ENCODE measurements at regions of chr14 and their contacts with region 1.

Region 1: GRCh38 chr14:106530423-106531107 is 1004.2 kb downstream of the TMEM121 start:
- DNase-seq: peak; percentile 43
- ATAC-seq: peak; percentile 69
- H3K4me3 Mint-ChIP-seq: no peak overlapping the region
- H3K27ac Mint-ChIP-seq: no peak overlapping the region
- H3K4me1 Mint-ChIP-seq: peaks cover 5% of the 10 kb centered on the region
- H3K27me3 Mint-ChIP-seq: peaks cover 33% of the 10 kb centered on the region

Region 2: DNA sequence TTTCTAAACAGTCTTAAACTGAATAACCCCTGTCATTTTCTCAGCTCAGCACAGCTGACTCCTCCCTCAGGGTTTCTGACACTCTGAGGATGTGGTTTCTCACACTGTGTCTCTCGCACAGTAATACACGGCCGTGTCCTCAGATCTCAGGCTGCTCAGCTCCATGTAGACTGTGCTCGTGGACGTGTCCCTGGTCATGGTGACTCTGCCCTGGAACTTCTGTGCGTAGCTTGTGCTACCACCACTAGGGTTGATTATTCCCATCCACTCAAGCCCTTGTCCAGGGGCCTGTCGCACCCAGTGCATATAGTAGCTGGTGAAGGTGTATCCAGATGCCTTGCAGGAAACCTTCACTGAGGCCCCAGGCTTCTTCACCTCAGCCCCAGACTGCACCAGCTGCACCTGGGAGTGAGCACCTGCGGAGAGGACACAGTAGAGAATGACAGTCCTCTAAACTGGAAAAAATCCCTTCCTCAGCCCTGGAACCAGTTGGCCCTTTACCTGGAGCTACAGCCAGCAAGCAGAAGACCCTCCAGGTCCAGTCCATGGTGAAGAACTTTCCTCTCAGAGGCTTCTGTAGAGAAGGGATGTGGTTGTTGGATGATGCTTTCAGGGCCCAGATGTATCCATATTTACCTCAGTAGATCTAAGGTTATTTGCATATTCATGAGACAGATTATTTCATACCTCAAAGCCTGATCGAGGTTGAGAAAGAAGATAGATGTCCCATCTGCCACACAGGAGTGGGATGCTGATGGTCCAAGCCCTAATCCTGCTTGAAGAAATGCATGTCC is 19.4 kb before region 1 on chr14:
- CTCF ChIA-PET with region 1: interaction called, 84 read pairs
- POLR2A ChIA-PET with region 1: no interaction called
- DNase-seq: peak; percentile 82
- ATAC-seq: peak; percentile 79
- H3K4me3 Mint-ChIP-seq: peak overlapping the region; percentile 56
- H3K27ac Mint-ChIP-seq: peak overlapping the region; percentile 93
- H3K4me1 Mint-ChIP-seq: peaks cover 71% of the 10 kb centered on the region
- H3K27me3 Mint-ChIP-seq: peaks cover 17% of the 10 kb centered on the region

Region 3: DNA sequence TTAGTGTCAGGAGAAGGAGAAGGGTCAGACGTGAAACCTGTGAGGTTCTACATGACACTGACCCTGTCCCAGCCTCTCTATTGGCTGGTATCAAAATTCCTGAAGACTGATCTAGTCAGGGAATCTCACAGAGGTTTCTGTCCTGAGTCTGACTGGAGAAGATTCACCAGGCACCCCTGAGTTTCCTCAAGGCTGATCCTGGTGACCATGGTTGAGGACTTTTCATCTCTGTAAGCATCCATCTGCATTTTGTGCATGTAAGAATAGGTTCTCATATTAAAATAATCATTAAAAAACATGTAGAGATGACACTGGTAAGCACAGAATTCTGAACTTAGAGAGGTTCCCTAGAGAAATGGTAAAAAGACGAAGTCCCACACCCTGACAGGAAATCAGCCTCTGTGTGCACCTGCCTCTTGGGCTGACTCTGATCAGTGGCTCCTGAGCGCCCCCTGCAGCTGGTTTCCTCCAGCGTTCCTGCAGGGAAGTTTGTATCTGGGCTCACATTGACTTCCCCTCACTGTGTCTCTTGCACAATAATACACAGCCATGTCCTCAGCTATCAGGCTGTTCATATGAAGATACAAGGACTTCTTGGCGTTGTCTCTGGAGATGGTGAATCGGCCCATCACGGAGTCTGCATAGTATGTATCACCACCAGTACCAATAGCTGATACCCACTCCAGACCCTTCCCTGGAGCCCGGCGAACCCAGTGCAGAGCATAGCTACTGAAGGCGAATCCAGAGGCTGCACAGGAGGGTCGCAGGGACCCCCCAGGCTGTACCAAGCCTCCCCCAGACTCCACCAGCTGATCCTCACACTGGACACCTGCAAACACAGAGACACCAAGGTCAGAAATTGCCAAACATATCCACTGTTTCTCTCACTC is 12.3 kb before region 1 on chr14:
- CTCF ChIA-PET with region 1: interaction called, 72 read pairs
- POLR2A ChIA-PET with region 1: no interaction called
- DNase-seq: peak; percentile 91
- ATAC-seq: peak; percentile 81
- H3K4me3 Mint-ChIP-seq: no peak overlapping the region
- H3K27ac Mint-ChIP-seq: no peak overlapping the region
- H3K4me1 Mint-ChIP-seq: peaks cover 14% of the 10 kb centered on the region
- H3K27me3 Mint-ChIP-seq: peaks cover 34% of the 10 kb centered on the region

Region 4: GRCh38 chr14:106556665-106557289 is 26.2 kb after region 1 on chr14:
- CTCF ChIA-PET with region 1: interaction called, 25 read pairs
- POLR2A ChIA-PET with region 1: no interaction called
- DNase-seq: peak; percentile 80
- ATAC-seq: peak; percentile 44
- H3K4me3 Mint-ChIP-seq: no peak overlapping the region
- H3K27ac Mint-ChIP-seq: no peak overlapping the region
- H3K4me1 Mint-ChIP-seq: no peaks in the 10 kb centered on the region
- H3K27me3 Mint-ChIP-seq: peaks cover 29% of the 10 kb centered on the region

Region 5: GRCh38 chr14:106564058-106564656 is 33.6 kb after region 1 on chr14:
- CTCF ChIA-PET with region 1: interaction called, 25 read pairs
- POLR2A ChIA-PET with region 1: no interaction called
- DNase-seq: peak; percentile 79
- ATAC-seq: peak; percentile 77
- H3K4me3 Mint-ChIP-seq: no peak overlapping the region
- H3K27ac Mint-ChIP-seq: no peak overlapping the region
- H3K4me1 Mint-ChIP-seq: no peaks in the 10 kb centered on the region
- H3K27me3 Mint-ChIP-seq: peaks cover 35% of the 10 kb centered on the region

Region 6: GRCh38 chr14:106586098-106586704 is 55.6 kb after region 1 on chr14:
- CTCF ChIA-PET with region 1: interaction called, 10 read pairs
- POLR2A ChIA-PET with region 1: no interaction called
- DNase-seq: peak; percentile 78
- ATAC-seq: peak; percentile 87
- H3K4me3 Mint-ChIP-seq: no peak overlapping the region
- H3K27ac Mint-ChIP-seq: no peak overlapping the region
- H3K4me1 Mint-ChIP-seq: peaks cover 17% of the 10 kb centered on the region
- H3K27me3 Mint-ChIP-seq: peaks cover 27% of the 10 kb centered on the region

Region 7: GRCh38 chr14:106691601-106692291 is 161.2 kb after region 1 on chr14:
- CTCF ChIA-PET with region 1: no interaction called
- POLR2A ChIA-PET with region 1: no interaction called
- DNase-seq: peak; percentile 72
- ATAC-seq: peak; percentile 16
- H3K4me3 Mint-ChIP-seq: no peak overlapping the region
- H3K27ac Mint-ChIP-seq: no peak overlapping the region
- H3K4me1 Mint-ChIP-seq: peaks cover 32% of the 10 kb centered on the region
- H3K27me3 Mint-ChIP-seq: peaks cover 10% of the 10 kb centered on the region

Measured in activated CD8-positive, alpha-beta T cell treated with anti-CD3 and anti-CD28 coated beads, Interleukin-2, amount 10 ng/mL, durations not matched to agents 7 days and 5 days (primary cell).